ENCODE measurements at regions of chr17 and their contacts with region 1.

Region 1: GRCh38 chr17:8785547-8786413 is 13.4 kb downstream of the MFSD6L start:
- DNase-seq: peak; percentile 59
- ATAC-seq: peak; percentile 56
- H3K4me3 Mint-ChIP-seq: no peak overlapping the region
- H3K27ac Mint-ChIP-seq: no peak overlapping the region
- H3K4me1 Mint-ChIP-seq: peaks cover 2% of the 10 kb centered on the region
- H3K27me3 Mint-ChIP-seq: peaks cover 9% of the 10 kb centered on the region
- CTCF ChIP-seq: peak; percentile 36

Region 2: DNA sequence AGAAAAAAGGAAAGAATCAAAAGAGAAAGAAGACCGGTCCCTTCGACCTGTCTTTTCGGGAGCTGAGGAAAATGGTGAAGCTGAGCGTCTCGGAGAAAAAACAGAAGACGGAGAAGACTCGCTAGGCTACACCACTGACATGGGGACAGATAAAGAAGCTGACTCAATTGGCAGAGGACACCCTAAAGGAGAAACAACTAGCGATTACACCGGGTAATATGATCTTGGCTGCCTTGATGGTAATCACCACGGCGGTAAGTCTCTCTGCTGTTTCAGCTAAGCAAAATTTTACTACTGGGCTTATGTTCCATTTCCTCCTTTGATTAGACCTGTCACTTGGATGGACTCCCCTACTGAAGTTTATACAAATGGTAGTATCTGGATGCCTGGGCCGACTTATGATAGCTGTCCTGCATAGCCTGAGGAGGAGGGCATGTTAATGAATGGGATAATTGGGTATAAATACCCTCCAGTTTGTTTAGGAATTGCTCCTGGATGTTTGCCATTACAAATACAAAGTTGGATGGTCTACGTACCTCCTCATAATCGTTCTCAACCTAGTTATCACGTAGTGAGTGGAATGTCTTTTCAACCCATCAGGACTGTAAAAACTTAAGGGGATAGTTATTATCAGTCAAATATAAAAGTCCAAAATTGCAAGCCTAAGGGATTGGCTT is 722.8 kb before region 1 on chr17:
- CTCF ChIA-PET with region 1: interaction called, 3 read pairs
- POLR2A ChIA-PET with region 1: no interaction called
- intact Hi-C with region 1: loop called (anchors 2 kb)
- DNase-seq: no peak
- ATAC-seq: no peak
- H3K4me3 Mint-ChIP-seq: no peak overlapping the region
- H3K27ac Mint-ChIP-seq: no peak overlapping the region
- H3K4me1 Mint-ChIP-seq: no peaks in the 10 kb centered on the region
- H3K27me3 Mint-ChIP-seq: peaks cover 30% of the 10 kb centered on the region
- CTCF ChIP-seq: no peak

Region 3: GRCh38 chr17:8740486-8740885 is 45.3 kb before region 1 on chr17:
- CTCF ChIA-PET with region 1: no interaction called
- POLR2A ChIA-PET with region 1: no interaction called
- intact Hi-C with region 1: no loop called
- DNase-seq: peak; percentile 42
- ATAC-seq: peak; percentile 79
- H3K4me3 Mint-ChIP-seq: peak overlapping the region; percentile 83
- H3K27ac Mint-ChIP-seq: peak overlapping the region; percentile 53
- H3K4me1 Mint-ChIP-seq: peaks cover 16% of the 10 kb centered on the region
- H3K27me3 Mint-ChIP-seq: no peaks in the 10 kb centered on the region
- CTCF ChIP-seq: no peak

Region 4: GRCh38 chr17:8806926-8807550 is 21.3 kb after region 1 on chr17:
- CTCF ChIA-PET with region 1: interaction called, 11 read pairs
- POLR2A ChIA-PET with region 1: no interaction called
- intact Hi-C with region 1: no loop called
- DNase-seq: peak; percentile 34
- ATAC-seq: peak; percentile 90
- H3K4me3 Mint-ChIP-seq: peak overlapping the region; percentile 56
- H3K27ac Mint-ChIP-seq: peak overlapping the region; percentile 92
- H3K4me1 Mint-ChIP-seq: peaks cover 42% of the 10 kb centered on the region
- H3K27me3 Mint-ChIP-seq: no peaks in the 10 kb centered on the region
- CTCF ChIP-seq: no peak

Region 5: GRCh38 chr17:8954339-8954738 is 168.6 kb after region 1 on chr17:
- CTCF ChIA-PET with region 1: no interaction called
- POLR2A ChIA-PET with region 1: interaction called, 12 read pairs
- intact Hi-C with region 1: no loop called
- DNase-seq: peak; percentile 48
- ATAC-seq: peak; percentile 99
- H3K4me3 Mint-ChIP-seq: peak overlapping the region; percentile 70
- H3K27ac Mint-ChIP-seq: peak overlapping the region; percentile 86
- H3K4me1 Mint-ChIP-seq: peaks cover 92% of the 10 kb centered on the region
- H3K27me3 Mint-ChIP-seq: no peaks in the 10 kb centered on the region
- CTCF ChIP-seq: no peak

Region 6: DNA sequence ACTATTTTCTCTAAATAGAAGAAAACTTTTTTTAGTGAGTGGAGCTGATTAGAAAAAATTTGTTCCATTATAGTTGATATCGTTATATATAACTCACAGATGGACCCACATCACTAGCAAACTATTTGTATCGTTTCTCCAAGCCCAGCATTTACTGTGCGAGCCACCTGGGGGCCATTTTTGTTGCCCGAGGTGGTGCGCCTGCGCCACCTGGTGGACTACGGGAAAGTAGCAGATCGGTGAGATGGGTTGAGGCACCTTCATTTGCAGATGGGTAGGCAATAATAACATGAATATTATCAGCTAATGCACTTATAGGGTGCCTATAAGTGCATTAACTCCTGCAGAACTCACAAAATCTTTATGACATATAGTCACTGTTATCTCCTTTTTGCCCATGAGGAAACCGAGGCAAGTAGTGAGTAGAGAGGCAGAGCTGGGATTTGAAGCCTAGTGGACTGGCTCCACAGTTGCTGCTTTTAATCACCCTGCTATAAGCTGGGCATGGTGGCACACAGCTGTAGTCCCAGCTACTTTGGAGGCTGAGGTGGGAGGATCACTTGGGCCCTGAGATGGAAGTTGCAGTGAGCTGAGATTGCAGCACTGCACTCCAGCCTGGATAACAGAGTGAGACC is 212.3 kb after region 1 on chr17:
- CTCF ChIA-PET with region 1: interaction called, 12 read pairs
- POLR2A ChIA-PET with region 1: no interaction called
- intact Hi-C with region 1: no loop called
- DNase-seq: peak; percentile 72
- ATAC-seq: peak; percentile 74
- H3K4me3 Mint-ChIP-seq: no peak overlapping the region
- H3K27ac Mint-ChIP-seq: no peak overlapping the region
- H3K4me1 Mint-ChIP-seq: peaks cover 22% of the 10 kb centered on the region
- H3K27me3 Mint-ChIP-seq: peaks cover 10% of the 10 kb centered on the region
- CTCF ChIP-seq: peak; percentile 73